ENCODE measurements at regions of chr17 and their contacts with region 1.

Region 1: GRCh38 chr17:49180303-49180702 is 30.1 kb downstream of the GNGT2 start:
- DNase-seq: peak in 1 of 2 experiments; percentile 89
- H3K4me3 ChIP-seq: no peak overlapping the region
- H3K27ac ChIP-seq: no peak overlapping the region
- H3K4me1 ChIP-seq: no peaks in the 10 kb centered on the region
- H3K27me3 ChIP-seq: no peaks in the 10 kb centered on the region
- CTCF ChIP-seq: peak; percentile 60 to 93 (median 75)
- EP300 ChIP-seq: no peak
- POLR2A ChIP-seq: no peak
- RAD21 ChIP-seq: peak; percentile 77 to 81

Region 2: DNA sequence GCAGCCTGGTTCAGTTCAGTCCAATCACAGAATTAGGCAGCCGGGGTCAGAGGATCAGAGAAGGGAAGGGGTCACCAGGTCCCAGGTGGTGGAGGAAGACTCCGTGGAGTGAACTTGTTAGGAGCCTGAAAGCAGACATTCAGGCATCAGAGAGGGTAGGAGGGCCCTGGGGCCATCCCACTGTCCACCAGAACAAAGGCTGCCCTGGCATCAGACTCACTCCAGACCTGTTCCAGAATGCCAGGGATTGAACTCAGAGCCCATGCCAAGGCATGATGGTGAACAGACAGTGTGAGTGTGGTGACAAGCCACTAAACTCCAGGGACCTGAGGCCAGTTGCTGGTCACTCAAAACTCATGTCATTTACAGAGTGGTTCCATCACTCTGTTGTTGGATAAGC is 10.1 kb before region 1 on chr17:
- CTCF ChIA-PET with region 1: interaction called, 35 read pairs
- POLR2A ChIA-PET with region 1: no interaction called
- DNase-seq: no peak
- H3K4me3 ChIP-seq: no peak overlapping the region
- H3K27ac ChIP-seq: no peak overlapping the region
- H3K4me1 ChIP-seq: no peaks in the 10 kb centered on the region
- H3K27me3 ChIP-seq: peaks cover 0 to 3% (median 1%) of the 10 kb centered on the region in 4 experiments; a peak in 1 of 7 replicates
- CTCF ChIP-seq: no peak
- EP300 ChIP-seq: no peak
- POLR2A ChIP-seq: no peak
- RAD21 ChIP-seq: no peak

Region 3: GRCh38 chr17:49191917-49192741 is 11.8 kb after region 1 on chr17:
- CTCF ChIA-PET with region 1: interaction called, 13 read pairs
- POLR2A ChIA-PET with region 1: interaction called, 8 read pairs
- DNase-seq: peak; percentile 70 to 99
- H3K4me3 ChIP-seq: peak overlapping the region; percentile 78 to 97 (median 95)
- H3K27ac ChIP-seq: peak overlapping the region; percentile 82; the same call in 1 of the 2 replicates
- H3K4me1 ChIP-seq: peaks cover 0 to 3% (median 1%) of the 10 kb centered on the region in 4 experiments; a peak in 1 of 7 replicates
- H3K27me3 ChIP-seq: no peaks in the 10 kb centered on the region
- CTCF ChIP-seq: peak in 2 of 3 experiments; percentile 3 to 23; a peak in 2 of 4 replicates
- EP300 ChIP-seq: no peak
- POLR2A ChIP-seq: peak in 1 of 2 experiments; percentile 35; a peak in 2 of 3 replicates
- RAD21 ChIP-seq: no peak

Region 4: DNA sequence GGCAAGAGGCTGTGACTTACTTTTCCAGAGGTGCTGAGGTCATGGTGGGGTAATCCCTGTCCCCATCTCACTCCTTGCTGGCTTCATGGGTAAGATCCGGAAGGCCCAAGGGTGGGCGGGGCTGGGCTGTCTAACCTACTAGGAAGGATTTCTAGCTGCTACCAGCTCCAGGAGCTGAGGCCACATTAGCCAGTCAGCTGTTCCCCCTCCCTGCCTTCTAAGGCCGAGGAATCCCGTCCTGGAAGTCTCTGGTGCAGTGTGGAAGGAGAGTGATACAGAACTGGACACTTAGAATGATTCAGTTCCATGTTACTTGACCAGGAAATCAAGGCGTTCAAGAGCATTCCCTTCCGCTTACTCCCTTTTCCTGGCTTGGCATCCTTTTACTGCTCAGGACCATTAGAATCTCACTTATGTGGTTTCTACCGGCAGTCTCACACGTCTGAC is 21.2 kb after region 1 on chr17:
- CTCF ChIA-PET with region 1: interaction called, 10 read pairs
- POLR2A ChIA-PET with region 1: interaction called, 5 read pairs
- DNase-seq: no peak
- H3K4me3 ChIP-seq: no peak overlapping the region
- H3K27ac ChIP-seq: no peak overlapping the region
- H3K4me1 ChIP-seq: no peaks in the 10 kb centered on the region
- H3K27me3 ChIP-seq: no peaks in the 10 kb centered on the region; a peak in 1 of 7 replicates
- CTCF ChIP-seq: no peak
- EP300 ChIP-seq: no peak
- POLR2A ChIP-seq: no peak
- RAD21 ChIP-seq: no peak

Region 5: GRCh38 chr17:49223517-49224197 is 43.4 kb after region 1 on chr17:
- CTCF ChIA-PET with region 1: interaction called, 17 read pairs
- POLR2A ChIA-PET with region 1: no interaction called
- DNase-seq: peak in 1 of 2 experiments; percentile 97
- H3K4me3 ChIP-seq: peak overlapping the region; percentile 34 to 63 (median 55)
- H3K27ac ChIP-seq: no peak overlapping the region
- H3K4me1 ChIP-seq: peaks cover 0 to 8% (median 6%) of the 10 kb centered on the region in 4 experiments; a peak in 4 of 7 replicates
- H3K27me3 ChIP-seq: peaks cover 19 to 54% (median 43%) of the 10 kb centered on the region in 4 experiments
- CTCF ChIP-seq: peak; percentile 78 to 92 (median 88)
- EP300 ChIP-seq: no peak
- POLR2A ChIP-seq: no peak
- RAD21 ChIP-seq: peak; percentile 50 to 65

Measured in H1 (cell line).